Posterior cingulate gyrus (tissue), 11 donors: ENCODE measurements at regions of chr2 and their contacts with region 1.

Region 1: GRCh38 chr2:207769597-207770486 is at the start of gene FZD5:
- DNase-seq: peak; percentile 92 to 99 (median 96)

Region 2: DNA sequence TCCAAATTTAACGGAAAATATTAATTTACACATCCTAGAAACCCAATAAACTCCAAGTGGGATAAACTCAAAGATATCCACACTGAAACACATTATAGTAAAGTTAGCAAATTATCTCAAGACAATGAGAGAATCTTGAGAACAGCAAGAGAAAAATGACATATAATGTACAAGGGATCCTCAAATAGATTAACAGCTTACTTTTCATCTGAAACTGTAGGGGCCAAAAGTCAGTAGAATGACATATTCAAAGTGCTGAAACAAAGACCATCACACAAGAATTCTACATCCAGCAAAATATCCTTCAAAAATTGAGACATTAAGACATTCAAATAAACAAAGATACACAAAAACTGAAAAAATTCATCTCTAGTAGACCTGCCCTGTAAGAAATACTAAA is 126.0 kb before region 1 on chr2:
- intact Hi-C with region 1: no loop called
- DNase-seq: no peak

Region 3: DNA sequence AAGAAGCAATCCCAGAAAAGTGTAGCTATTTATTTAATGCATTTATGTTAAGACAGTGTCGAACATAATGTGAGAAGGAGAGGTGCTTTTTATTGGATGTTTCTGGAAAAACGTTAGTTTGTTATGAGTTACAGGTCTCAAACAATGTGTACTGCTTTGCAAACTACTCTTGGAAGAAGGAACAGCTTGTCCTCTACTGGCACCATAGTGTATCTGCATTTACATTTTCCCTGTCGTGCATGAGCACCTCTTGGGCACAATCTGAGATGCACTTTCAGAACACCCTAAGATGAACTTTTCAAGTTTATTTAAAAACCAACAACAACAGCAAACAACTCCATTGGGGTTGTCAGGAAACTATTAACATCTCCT is 35.6 kb before region 1 on chr2:
- intact Hi-C with region 1: no loop called
- DNase-seq: no peak

Region 4: DNA sequence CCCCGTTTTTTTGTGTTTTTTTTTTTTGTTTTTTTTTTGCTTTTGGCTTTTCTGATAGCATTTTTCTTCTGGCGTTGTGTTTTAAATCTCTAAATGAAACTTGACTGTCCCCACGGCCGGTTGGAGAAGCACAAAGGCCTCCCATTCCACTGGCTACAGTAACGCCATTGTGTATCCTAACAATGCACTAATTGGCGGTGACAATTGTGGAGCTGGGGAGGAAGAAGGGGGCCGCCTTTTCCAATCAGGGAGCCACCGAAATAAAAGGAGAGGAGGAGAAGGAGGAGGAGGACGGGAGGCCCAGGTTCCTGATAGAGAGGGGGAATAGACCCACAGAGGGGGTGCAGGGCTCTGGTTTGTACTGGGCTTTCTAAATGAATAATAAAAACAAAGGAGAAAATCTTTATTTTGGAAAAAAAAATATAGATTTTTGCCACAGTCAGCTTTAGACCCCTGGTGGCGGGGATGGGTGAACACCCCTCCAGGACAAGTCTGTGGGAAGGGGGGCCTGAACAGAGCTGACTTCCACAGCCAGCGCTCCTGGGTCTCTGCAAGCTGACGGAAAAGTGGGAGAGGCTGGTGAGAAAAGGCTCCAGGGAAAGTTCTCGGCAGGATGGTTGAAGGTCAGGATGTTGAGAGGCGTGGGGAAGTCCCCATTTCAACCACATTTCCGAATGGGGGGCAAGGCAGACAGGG is 43.5 kb after region 1 on chr2:
- intact Hi-C with region 1: loop called (anchors 2 kb)
- DNase-seq: peak in 7 of 10 donors; percentile 35 to 91 (median 53)

Region 5: GRCh38 chr2:207974216-207974605 is 204.4 kb after region 1 on chr2:
- intact Hi-C with region 1: loop called (anchors 2 kb)
- DNase-seq: no peak

Region 6: DNA sequence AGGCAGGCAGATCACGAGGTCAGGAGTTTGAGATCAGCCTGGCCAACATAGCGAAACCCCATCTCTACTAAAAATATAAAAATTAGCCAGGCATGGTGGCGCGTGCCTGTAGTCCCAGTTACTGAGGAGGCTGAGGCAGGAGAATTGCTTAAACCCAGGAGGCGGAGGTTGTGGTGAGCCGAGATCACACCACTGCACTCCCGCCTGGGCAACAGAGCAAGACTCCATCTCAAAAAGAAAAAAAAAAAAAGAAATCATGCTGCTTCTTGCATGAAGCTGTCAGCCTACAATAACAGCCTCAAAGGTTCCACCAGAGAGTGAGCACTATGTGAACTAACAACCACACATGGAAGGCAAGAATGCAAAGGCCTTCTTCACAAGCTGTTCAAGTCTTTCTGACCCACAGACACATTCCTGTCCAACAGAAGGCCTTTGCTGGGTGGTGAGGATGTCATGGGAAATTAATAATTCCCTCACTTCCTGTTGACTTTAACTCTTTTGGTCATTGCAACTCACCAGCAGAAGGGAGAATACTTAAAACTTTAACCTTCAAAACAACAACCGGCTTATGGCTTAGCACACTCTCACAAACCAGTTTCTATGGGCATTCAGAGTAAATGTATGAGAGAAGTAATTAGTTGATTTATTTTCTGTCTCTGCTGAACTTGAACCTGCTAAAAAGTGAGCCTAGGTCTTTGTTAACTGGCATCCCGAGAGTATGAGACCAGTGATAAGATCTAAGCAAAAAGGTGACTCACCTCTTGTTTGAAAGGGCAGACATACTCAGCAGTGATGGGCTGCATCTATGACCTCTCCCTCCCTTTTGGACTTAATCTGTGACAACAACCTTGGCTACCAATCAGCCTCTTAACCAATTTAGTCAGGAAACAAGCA is 243.7 kb after region 1 on chr2:
- intact Hi-C with region 1: no loop called
- DNase-seq: no peak

Region 7: GRCh38 chr2:208024091-208024490 is 254.2 kb after region 1 on chr2:
- intact Hi-C with region 1: loop called (anchors 5 kb)
- DNase-seq: no peak

Region 8: DNA sequence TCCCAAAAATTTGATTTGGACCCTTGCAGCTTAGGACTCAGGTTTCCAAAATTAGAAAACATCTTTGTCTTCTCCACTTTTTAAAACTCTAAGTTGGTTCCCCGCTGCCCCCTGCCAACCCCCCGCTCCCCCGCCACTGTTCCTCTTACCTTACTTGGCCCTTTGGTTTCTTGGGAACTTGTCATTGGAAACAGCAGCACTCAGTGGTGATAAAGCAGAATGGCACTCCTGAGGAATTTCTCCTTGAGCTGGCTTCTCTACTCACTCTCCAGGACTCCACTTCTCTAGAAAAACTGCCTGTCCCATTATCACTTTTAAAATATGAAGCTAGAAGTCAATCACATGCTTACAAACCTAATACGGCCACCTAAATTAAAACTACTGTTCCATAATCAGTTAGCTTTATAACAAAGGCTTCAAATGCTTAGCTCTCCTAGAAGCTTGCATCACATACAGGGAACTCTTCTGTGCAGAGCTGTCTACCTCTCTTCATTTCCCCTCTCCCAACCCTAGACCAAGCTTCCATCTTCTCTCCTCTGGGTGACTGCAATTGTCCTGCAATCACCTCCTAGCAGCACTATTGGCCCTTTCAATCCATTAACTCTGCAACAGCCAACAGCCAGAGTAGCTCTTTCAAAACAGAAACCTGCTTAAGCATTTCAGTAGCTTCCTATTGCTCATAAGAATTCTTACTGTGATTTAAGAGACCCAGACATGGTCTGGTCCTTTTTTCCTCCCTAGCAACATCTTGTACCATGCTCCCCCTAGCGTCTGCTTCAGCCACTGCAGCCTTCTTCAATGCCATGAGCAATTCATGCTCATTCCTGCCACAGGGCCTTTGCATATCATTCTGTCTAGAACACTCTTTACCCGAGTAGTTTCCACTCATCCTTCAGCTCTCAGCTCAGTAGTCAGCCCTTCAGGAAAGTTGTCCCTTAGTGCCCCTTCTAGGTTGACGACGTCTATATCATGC is 270.6 kb after region 1 on chr2:
- intact Hi-C with region 1: loop called (anchors 5 kb)
- DNase-seq: peak in 9 of 10 donors; percentile 20 to 88 (median 59)